GM13977 (cell line): ENCODE measurements at regions of chr3 and their contacts with region 1.

Region 1: GRCh38 chr3:136385457-136385856 is 135.3 kb downstream of the PCCB start:
- DNase-seq: peak; percentile 23
- CTCF ChIP-seq: no peak

Region 2: GRCh38 chr3:135970506-135971116 is 414.8 kb before region 1 on chr3:
- in situ Hi-C with region 1: no loop called
- DNase-seq: no peak
- CTCF ChIP-seq: no peak

Region 3: DNA sequence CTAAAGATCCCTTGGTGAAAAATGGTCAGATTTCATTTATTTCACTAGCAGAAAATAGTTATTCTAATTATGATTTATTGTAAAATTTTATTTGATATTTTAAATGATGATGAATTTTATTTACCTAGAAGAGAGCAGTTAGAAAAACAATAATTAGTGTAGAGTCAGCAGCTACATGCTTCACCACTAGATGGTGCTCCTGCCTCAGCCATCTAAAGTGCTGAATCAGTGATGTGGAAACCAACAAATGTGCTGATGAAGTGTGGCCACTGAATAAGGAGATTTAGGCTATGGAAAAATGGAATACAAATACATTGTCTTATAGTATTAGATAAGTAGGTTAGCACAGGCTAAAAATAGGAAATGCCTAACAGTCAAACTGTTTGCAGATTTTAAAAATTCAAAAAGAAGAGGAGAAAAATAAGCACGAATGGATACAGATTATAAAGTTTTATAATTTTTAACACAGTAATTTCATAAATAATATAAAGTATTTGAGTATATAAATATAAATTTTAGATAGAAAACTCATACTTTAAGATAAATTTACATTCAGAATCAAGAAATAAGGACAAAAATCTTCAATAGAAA is 310.1 kb before region 1 on chr3:
- in situ Hi-C with region 1: no loop called
- DNase-seq: peak; percentile 51
- CTCF ChIP-seq: peak; percentile 89

Region 4: GRCh38 chr3:136728918-136729317 is 343.5 kb after region 1 on chr3:
- in situ Hi-C with region 1: loop called (anchors 25 kb)
- DNase-seq: no peak
- CTCF ChIP-seq: no peak

Region 5: GRCh38 chr3:137013955-137014688 is 628.7 kb after region 1 on chr3:
- in situ Hi-C with region 1: loop called (anchors 25 kb)
- DNase-seq: peak; percentile 80
- CTCF ChIP-seq: peak; percentile 81